ENCODE measurements at regions of chr18 and their contacts with region 1.

Region 1: GRCh38 chr18:74342416-74343043 is 26.9 kb downstream of the C18orf63 start:
- DNase-seq: peak in 1 of 2 donors; percentile 35
- H3K4me3 ChIP-seq: no peak overlapping the region
- H3K27ac ChIP-seq: no peak overlapping the region
- H3K4me1 ChIP-seq: no peaks in the 10 kb centered on the region
- H3K27me3 ChIP-seq: no peaks in the 10 kb centered on the region
- CTCF ChIP-seq: peak; percentile 67 to 79 (median 71)
- POLR2A ChIP-seq: no peak

Region 2: GRCh38 chr18:74204526-74205152 is 137.9 kb before region 1 on chr18:
- intact Hi-C with region 1: loop called (anchors 5 kb)
- DNase-seq: peak in 1 of 2 donors; percentile 29
- H3K4me3 ChIP-seq: no peak overlapping the region
- H3K27ac ChIP-seq: no peak overlapping the region
- H3K4me1 ChIP-seq: no peaks in the 10 kb centered on the region
- H3K27me3 ChIP-seq: no peaks in the 10 kb centered on the region
- CTCF ChIP-seq: no peak
- POLR2A ChIP-seq: no peak

Region 3: DNA sequence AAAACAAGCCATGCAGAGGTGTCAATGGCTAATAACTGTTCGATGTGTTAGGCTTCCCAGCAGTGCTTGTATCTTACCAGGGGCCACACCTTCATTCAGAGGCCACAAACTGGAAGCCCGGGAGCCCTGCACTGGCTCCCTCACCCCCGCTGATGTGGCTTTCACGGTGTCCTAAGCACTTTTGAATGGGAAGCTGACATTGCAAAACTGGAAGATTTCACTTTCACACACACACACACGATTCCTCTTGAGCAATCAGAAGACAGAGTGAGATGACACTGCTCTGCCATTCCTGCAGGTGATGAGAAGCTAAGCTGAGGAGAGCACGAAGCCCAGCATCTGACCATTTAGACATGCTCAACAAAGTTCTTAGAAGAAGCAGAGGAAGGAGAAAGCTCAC is 246.5 kb after region 1 on chr18:
- intact Hi-C with region 1: no loop called
- DNase-seq: no peak
- H3K4me3 ChIP-seq: no peak overlapping the region
- H3K27ac ChIP-seq: no peak overlapping the region
- H3K4me1 ChIP-seq: no peaks in the 10 kb centered on the region
- H3K27me3 ChIP-seq: no peaks in the 10 kb centered on the region
- CTCF ChIP-seq: no peak
- POLR2A ChIP-seq: no peak

Measured in uterus (tissue), 4 donors.